ENCODE measurements at regions of chr16 and their contacts with region 1.

Region 1: GRCh38 chr16:71808593-71809459 is at the start of gene AP1G1:
- DNase-seq: peak; percentile 79
- ATAC-seq: peak; percentile 86
- H3K4me3 Mint-ChIP-seq: peak within 1 kb of the TSS; percentile 98
- H3K27ac Mint-ChIP-seq: peak within 1 kb of the TSS; percentile 100
- H3K4me1 Mint-ChIP-seq: peaks cover 35% of the 10 kb centered on the region
- H3K27me3 Mint-ChIP-seq: no peaks in the 10 kb centered on the region
- CTCF ChIP-seq: no peak
- total RNA-seq, gene AP1G1: 112 and 120 TPM in 2 replicates

Region 2: DNA sequence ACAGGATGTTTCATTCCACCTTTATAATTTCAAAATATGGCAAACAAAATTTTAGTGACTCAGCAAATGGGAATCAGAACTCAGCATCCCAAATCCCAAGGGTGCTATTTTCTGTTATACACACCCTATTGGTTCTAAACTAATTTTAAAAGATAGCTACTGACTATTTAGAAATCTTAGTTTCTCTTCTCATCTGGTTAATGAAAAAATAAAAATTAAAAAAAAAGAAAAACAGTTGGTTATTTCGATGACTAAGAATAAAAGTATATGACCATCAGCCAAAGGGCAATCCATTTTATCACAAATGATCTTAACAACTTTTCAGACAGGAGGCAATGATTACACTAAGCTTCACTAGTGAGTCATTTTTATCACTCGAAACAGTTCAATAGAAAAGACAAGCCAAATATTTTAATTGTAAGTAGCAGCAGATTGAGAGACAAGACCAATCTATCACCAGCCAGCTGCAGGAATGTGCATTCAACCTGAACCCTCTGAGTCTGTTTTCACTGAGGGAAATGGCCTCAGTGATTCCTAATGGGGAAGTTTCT is 99.5 kb before region 1 on chr16:
- CTCF ChIA-PET with region 1: no interaction called
- POLR2A ChIA-PET with region 1: no interaction called
- intact Hi-C with region 1: no loop called
- DNase-seq: no peak
- ATAC-seq: no peak
- H3K4me3 Mint-ChIP-seq: no peak overlapping the region
- H3K27ac Mint-ChIP-seq: no peak overlapping the region
- H3K4me1 Mint-ChIP-seq: peaks cover 8% of the 10 kb centered on the region
- H3K27me3 Mint-ChIP-seq: no peaks in the 10 kb centered on the region
- CTCF ChIP-seq: no peak

Region 3: GRCh38 chr16:71723537-71724319 is 85.1 kb before region 1 on chr16:
- CTCF ChIA-PET with region 1: no interaction called
- POLR2A ChIA-PET with region 1: interaction called, 6 read pairs
- intact Hi-C with region 1: loop called (anchors 1 kb)
- DNase-seq: peak; percentile 87
- ATAC-seq: peak; percentile 80
- H3K4me3 Mint-ChIP-seq: peak overlapping the region; percentile 85
- H3K27ac Mint-ChIP-seq: peak overlapping the region; percentile 85
- H3K4me1 Mint-ChIP-seq: peaks cover 50% of the 10 kb centered on the region
- H3K27me3 Mint-ChIP-seq: no peaks in the 10 kb centered on the region
- CTCF ChIP-seq: no peak

Region 4: GRCh38 chr16:71792176-71792575 is 16.6 kb before region 1 on chr16:
- CTCF ChIA-PET with region 1: no interaction called
- POLR2A ChIA-PET with region 1: interaction called, 10 read pairs
- intact Hi-C with region 1: no loop called
- DNase-seq: no peak
- ATAC-seq: no peak
- H3K4me3 Mint-ChIP-seq: no peak overlapping the region
- H3K27ac Mint-ChIP-seq: no peak overlapping the region
- H3K4me1 Mint-ChIP-seq: peaks cover 47% of the 10 kb centered on the region
- H3K27me3 Mint-ChIP-seq: no peaks in the 10 kb centered on the region
- CTCF ChIP-seq: no peak

Region 5: GRCh38 chr16:71853413-71853812 is 44.6 kb after region 1 on chr16:
- CTCF ChIA-PET with region 1: interaction called, 3 read pairs
- POLR2A ChIA-PET with region 1: interaction called, 12 read pairs
- intact Hi-C with region 1: no loop called
- DNase-seq: no peak
- ATAC-seq: peak; percentile 81
- H3K4me3 Mint-ChIP-seq: peak overlapping the region; percentile 55
- H3K27ac Mint-ChIP-seq: peak overlapping the region; percentile 84
- H3K4me1 Mint-ChIP-seq: peaks cover 43% of the 10 kb centered on the region
- H3K27me3 Mint-ChIP-seq: no peaks in the 10 kb centered on the region
- CTCF ChIP-seq: no peak

Region 6: DNA sequence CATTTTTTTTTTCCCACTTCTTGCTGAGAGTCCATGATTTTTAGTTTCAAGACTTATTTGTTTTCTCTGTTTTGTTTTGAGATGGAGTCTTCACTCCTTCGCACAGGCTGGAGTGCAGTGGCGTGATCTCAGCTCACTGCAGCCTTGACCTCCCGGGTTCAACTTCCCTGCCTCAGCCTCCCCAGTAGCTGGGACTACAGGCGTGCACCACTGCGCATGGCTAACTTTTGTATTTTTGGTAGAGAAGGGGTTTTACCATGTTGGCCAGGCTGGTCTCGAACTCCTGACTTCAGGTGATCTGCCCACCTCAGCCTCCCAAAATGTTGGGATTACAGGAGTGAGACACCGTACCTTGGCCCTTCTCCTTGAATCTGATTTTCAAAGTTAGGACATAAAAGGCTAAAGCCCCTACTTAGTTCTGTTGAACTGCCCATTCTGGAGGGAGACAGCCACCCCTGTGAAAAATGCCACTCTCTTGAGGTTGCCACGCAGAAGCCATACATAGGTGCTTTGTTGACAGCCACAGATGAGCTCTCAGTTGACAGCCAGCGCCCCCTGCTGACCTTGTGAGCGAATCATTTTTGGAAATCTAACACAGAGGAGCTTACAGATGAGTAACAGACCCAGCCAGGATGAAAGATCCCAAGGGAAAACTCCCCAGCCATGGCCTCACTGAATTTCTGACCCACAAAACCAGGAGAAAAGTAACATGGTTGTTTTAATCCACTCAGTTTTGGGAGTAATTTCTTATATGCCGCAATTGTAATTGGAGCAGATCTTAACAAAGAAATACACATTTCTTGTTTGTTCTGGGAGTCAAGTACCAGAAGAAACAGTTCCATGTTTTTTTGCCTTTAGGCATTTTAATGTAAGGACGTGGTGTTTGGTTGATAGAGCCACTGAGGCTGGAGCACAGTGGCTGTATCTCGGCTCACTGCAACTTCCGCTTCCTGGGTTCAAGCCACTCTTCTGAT is 152.5 kb after region 1 on chr16:
- CTCF ChIA-PET with region 1: no interaction called
- POLR2A ChIA-PET with region 1: no interaction called
- intact Hi-C with region 1: loop called (anchors 2 kb)
- DNase-seq: peak; percentile 63
- ATAC-seq: peak; percentile 89
- H3K4me3 Mint-ChIP-seq: no peak overlapping the region
- H3K27ac Mint-ChIP-seq: no peak overlapping the region
- H3K4me1 Mint-ChIP-seq: peaks cover 27% of the 10 kb centered on the region
- H3K27me3 Mint-ChIP-seq: peaks cover 3% of the 10 kb centered on the region
- CTCF ChIP-seq: no peak